OCI-LY7 (cell line): ENCODE measurements at regions of chr2 and their contacts with region 1.

Region 1: GRCh38 chr2:208025037-208025813 is at the start of gene PLEKHM3:
- DNase-seq: peak; percentile 84
- H3K4me3 ChIP-seq: peak within 1 kb of the TSS; percentile 89
- H3K27ac ChIP-seq: peak within 1 kb of the TSS; percentile 27
- H3K4me1 ChIP-seq: peaks cover 7% of the 10 kb centered on the region
- CTCF ChIP-seq: no peak
- total RNA-seq, gene PLEKHM3: 4.0 and 6.3 TPM in 2 replicates

Region 2: DNA sequence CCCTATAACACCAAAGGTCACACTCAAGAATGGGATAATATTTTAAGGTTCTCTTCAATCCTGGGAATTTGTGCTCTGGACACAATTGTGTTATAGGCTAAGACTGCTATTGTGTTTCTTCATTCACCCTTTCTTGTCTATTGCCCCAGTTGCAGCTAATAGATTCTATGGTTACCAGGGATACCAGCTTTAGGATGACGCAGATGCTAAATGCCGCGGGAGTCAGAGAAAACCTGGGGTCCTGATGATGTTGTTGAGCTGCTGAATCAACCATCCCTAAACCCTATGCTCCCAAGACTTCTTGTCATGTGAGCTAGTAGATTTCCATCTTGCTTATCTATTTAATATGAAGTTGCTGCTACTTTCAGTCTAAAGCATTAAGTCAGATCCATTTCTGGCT is 93.7 kb after region 1 on chr2:
- CTCF ChIA-PET with region 1: no interaction called
- POLR2A ChIA-PET with region 1: no interaction called
- intact Hi-C with region 1: no loop called
- DNase-seq: no peak
- H3K4me3 ChIP-seq: no peak overlapping the region
- H3K27ac ChIP-seq: no peak overlapping the region
- H3K4me1 ChIP-seq: no peaks in the 10 kb centered on the region
- CTCF ChIP-seq: no peak

Region 3: GRCh38 chr2:210002158-210003157 is 1977.2 kb after region 1 on chr2 and contains the start of gene RPE:
- CTCF ChIA-PET with region 1: no interaction called
- POLR2A ChIA-PET with region 1: no interaction called
- intact Hi-C with region 1: loop called (anchors 5 kb)
- DNase-seq: peak; percentile 97
- H3K4me3 ChIP-seq: peak within 1 kb of the TSS; percentile 89
- H3K27ac ChIP-seq: peak within 1 kb of the TSS; percentile 58
- H3K4me1 ChIP-seq: peaks cover 38% of the 10 kb centered on the region
- CTCF ChIP-seq: no peak
- total RNA-seq, gene RPE: 63.5 and 75.1 TPM in 2 replicates